OCI-LY7 (cell line): ENCODE measurements at regions of chr14 and their contacts with region 1.

Region 1: DNA sequence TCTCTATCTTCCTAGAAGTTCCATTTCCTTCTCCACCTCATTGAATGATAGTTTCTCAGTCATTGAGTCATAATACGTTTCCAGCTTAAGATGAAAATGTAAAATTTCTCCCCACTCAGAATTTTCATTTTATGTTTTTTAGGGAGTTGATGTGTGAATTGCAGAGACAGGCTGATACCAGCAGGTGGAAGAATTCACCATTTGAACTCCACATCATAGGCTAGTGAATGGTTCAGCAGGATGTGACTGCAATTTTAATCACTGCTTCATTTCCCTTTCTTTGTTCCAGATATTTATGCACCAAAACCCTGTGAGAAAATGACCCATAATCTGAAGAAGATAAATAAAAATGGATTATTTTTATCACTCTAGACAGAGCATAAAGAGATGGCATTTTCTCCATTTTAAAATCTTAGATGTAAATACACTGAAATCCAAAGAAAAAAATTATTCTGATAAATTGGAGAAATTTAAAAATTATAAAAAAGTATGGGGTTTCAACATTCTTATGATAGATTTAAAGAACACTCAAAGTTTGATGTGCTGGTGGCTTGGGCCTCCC is 10.6 kb upstream of the PYGL start:
- DNase-seq: peak; percentile 63
- H3K4me3 ChIP-seq: no peak overlapping the region
- H3K27ac ChIP-seq: no peak overlapping the region
- H3K4me1 ChIP-seq: no peaks in the 10 kb centered on the region
- CTCF ChIP-seq: peak; percentile 87

Region 2: DNA sequence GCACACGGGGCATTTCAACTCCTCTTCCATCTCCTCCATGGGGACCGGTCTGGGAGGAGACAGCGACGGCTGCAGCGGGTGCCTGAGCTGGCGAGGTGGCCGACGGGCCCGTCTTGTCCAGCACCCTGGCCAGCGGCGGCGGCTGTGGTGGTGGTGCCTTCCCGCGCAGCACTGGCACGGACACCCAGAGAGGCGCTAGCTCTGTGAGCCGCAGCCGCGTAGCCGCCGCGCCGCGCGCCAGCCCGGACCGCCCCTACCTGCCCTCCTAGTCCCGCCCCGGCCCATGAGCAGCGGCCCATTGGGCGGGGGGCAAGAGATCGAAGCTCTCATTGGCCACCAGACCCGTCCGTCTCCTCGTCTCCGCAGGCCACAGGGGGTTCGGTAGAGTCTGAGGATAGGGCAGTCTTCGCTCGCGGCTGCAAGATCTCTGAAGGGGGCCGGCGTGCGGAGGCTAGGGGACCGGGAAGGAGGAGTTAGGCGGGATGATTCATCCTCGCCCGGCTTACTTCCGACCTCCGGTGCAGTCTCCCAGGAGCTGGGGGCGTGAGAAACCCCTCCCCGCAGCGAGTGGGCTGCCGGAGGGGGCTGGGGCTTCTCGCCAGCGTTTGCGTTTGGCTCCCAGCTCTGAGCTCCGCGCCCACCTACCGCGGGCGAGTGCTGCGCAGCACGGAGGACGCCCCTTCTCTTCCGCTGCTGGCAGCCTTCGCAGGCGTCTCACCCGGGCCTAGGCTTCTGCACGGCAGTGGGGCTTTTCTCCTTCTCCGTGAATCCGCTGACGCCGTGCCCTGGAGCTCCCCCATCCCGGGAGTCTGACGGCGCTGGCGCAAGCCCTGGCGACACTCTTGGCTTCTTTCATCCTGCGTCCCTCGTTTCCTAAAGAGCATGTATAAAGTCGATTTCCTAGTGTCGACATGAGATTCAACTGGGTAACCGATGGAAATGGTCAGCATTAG is 140.3 kb after region 1 on chr14 and contains the start of gene TRIM9:
- CTCF ChIA-PET with region 1: no interaction called
- POLR2A ChIA-PET with region 1: no interaction called
- intact Hi-C with region 1: loop called (anchors 10 kb)
- DNase-seq: peak; percentile 93
- H3K4me3 ChIP-seq: peak within 1 kb of the TSS; percentile 70
- H3K27ac ChIP-seq: no peak within 1 kb of the TSS
- H3K4me1 ChIP-seq: peaks cover 13% of the 10 kb centered on the region
- CTCF ChIP-seq: no peak
- total RNA-seq, gene TRIM9: 0.39 and 1.4 TPM in 2 replicates

Region 3: DNA sequence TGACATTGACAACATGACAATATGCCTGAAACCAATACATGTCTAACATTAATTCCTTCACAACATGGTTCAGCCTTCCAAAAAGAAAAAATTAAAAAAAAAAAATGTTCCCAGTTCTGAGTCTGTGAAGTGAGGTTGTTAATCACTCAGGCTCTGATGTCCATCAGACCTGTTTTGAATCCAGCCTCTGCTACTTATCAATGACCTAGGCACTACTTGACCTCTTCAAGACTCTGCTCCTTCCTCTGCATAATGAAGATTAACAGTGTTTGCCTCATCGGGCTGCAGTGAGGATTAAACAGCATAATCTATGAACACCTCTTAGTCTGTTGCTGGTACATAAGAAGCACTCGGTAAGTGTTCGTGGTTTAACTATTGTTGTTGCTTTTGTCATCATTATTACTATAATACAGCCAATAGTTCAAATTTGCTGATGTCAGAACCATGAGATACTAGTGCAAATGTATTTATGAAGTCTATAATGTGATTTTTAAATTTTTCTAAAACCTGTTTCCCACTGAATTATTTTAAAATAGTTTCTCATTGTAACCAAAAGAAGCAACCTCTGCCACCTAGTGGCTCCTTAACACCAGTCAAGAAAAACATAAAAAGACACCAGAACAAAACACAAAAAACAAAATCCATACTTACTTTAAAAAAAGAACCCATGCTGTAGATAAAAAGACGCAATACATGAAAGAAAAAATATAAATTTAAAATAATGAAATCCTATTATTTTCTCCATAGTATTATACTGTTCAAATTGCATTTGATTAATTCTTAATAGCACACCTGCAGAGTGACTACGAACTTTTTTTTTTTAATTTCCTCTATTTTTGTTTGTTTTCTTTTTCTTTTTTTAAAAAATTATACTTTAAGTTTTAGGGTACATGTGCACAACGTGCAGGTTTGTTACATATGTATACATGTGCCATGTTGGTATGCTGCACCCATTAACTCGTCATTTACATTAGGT is 264.9 kb after region 1 on chr14:
- CTCF ChIA-PET with region 1: no interaction called
- POLR2A ChIA-PET with region 1: no interaction called
- intact Hi-C with region 1: loop called (anchors 1 kb)
- DNase-seq: peak; percentile 30
- H3K4me3 ChIP-seq: no peak overlapping the region
- H3K27ac ChIP-seq: no peak overlapping the region
- H3K4me1 ChIP-seq: no peaks in the 10 kb centered on the region
- CTCF ChIP-seq: peak; percentile 85